CD8-positive, alpha-beta T cell (primary cell): ENCODE measurements at regions of chr11 and their contacts with region 1.

Region 1: GRCh38 chr11:122937983-122938382 is 43.7 kb downstream of the BSX start:
- DNase-seq: no peak
- ATAC-seq: no peak
- H3K4me3 ChIP-seq: no peak overlapping the region
- H3K4me3 Mint-ChIP-seq: no peak overlapping the region
- H3K27ac ChIP-seq: no peak overlapping the region
- H3K27ac Mint-ChIP-seq: no peak overlapping the region
- H3K4me1 ChIP-seq: no peaks in the 10 kb centered on the region
- H3K4me1 Mint-ChIP-seq: no peaks in the 10 kb centered on the region
- H3K27me3 ChIP-seq: no peaks in the 10 kb centered on the region
- H3K27me3 Mint-ChIP-seq: no peaks in the 10 kb centered on the region
- CTCF ChIP-seq: no peak

Region 2: GRCh38 chr11:122893131-122893530 is 44.9 kb before region 1 on chr11:
- CTCF ChIA-PET with region 1: no interaction called
- POLR2A ChIA-PET with region 1: no interaction called
- intact Hi-C with region 1: loop called in 1 of 2 experiments (anchors 5 kb)
- DNase-seq: no peak
- ATAC-seq: no peak
- H3K4me3 ChIP-seq: no peak overlapping the region
- H3K4me3 Mint-ChIP-seq: no peak overlapping the region
- H3K27ac ChIP-seq: no peak overlapping the region
- H3K27ac Mint-ChIP-seq: no peak overlapping the region
- H3K4me1 ChIP-seq: no peaks in the 10 kb centered on the region
- H3K4me1 Mint-ChIP-seq: peaks cover 2% of the 10 kb centered on the region
- H3K27me3 ChIP-seq: no peaks in the 10 kb centered on the region
- H3K27me3 Mint-ChIP-seq: no peaks in the 10 kb centered on the region
- CTCF ChIP-seq: no peak